Activated naive CD4-positive, alpha-beta T cell treated with anti-CD3 and anti-CD28 coated beads for 36 hours (primary cell): ENCODE measurements at regions of chr11 and their contacts with region 1.

Region 1: DNA sequence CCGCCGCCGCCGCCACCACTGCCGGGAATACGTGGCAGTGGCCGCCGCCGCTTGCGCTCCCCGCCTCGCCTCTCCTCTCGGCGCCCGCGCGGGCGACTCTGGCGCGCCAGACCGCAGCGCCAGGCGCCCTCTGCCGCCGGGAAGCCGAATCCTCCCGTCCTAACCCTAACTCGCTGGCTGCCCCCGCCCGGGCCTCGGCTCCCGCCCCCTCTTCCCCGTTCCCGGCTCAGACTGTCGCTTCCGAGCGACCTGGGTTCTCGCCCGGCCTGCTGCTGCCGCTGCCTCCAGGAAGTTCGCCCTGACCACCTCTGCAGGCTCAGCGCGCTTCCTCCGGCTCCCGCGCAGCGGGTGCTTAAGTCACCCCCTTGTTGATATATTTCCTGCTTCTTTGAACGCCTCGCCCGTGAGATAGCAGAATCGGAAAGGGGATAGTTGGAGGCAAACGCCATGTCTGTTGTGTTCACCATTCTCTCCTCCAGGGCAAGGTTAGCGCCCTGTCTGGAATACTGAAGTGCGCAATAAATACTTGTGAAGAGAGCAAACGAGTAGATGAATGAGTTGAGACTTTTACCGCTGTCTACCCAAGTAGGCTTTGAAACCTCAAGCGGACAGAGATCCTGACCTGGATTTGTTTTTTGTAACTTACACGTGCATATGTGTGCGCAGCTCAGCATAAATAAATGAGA is at the start of gene SMCO4:
- DNase-seq: peak; percentile 84
- H3K4me3 Mint-ChIP-seq: peak within 1 kb of the TSS; percentile 87
- H3K27ac Mint-ChIP-seq: peak within 1 kb of the TSS; percentile 82
- H3K4me1 Mint-ChIP-seq: peaks cover 20% of the 10 kb centered on the region
- H3K27me3 Mint-ChIP-seq: no peaks in the 10 kb centered on the region
- total RNA-seq, gene SMCO4: 23.7 to 26.8 TPM

Region 2: GRCh38 chr11:93197380-93198214 is 345.8 kb before region 1 on chr11 and contains the start of gene SLC36A4:
- CTCF ChIA-PET with region 1: no interaction called
- intact Hi-C with region 1: loop called (anchors 2 kb)
- DNase-seq: peak; percentile 92
- H3K4me3 Mint-ChIP-seq: peak within 1 kb of the TSS; percentile 80
- H3K27ac Mint-ChIP-seq: peak within 1 kb of the TSS; percentile 94
- H3K4me1 Mint-ChIP-seq: peaks cover 14% of the 10 kb centered on the region
- H3K27me3 Mint-ChIP-seq: no peaks in the 10 kb centered on the region
- total RNA-seq, gene SLC36A4: 13.2 to 13.9 TPM

Region 3: GRCh38 chr11:93652161-93652597 is 108.7 kb after region 1 on chr11:
- CTCF ChIA-PET with region 1: interaction called, 5 read pairs
- intact Hi-C with region 1: loop called (anchors 1 kb)
- DNase-seq: peak; percentile 17
- H3K4me3 Mint-ChIP-seq: no peak overlapping the region
- H3K27ac Mint-ChIP-seq: no peak overlapping the region
- H3K4me1 Mint-ChIP-seq: peaks cover 3% of the 10 kb centered on the region
- H3K27me3 Mint-ChIP-seq: no peaks in the 10 kb centered on the region

Region 4: GRCh38 chr11:93784152-93784934 is 240.9 kb after region 1 on chr11 and contains the start of gene MED17:
- CTCF ChIA-PET with region 1: no interaction called
- intact Hi-C with region 1: loop called (anchors 1 kb)
- DNase-seq: peak; percentile 94
- H3K4me3 Mint-ChIP-seq: peak within 1 kb of the TSS; percentile 99
- H3K27ac Mint-ChIP-seq: peak within 1 kb of the TSS; percentile 98
- H3K4me1 Mint-ChIP-seq: peaks cover 43% of the 10 kb centered on the region
- H3K27me3 Mint-ChIP-seq: no peaks in the 10 kb centered on the region
- total RNA-seq, gene MED17: 19.4 to 22.6 TPM

Region 5: GRCh38 chr11:94326947-94327346 is 783.5 kb after region 1 on chr11:
- CTCF ChIA-PET with region 1: no interaction called
- intact Hi-C with region 1: no loop called
- DNase-seq: no peak
- H3K4me3 Mint-ChIP-seq: no peak overlapping the region
- H3K27ac Mint-ChIP-seq: no peak overlapping the region
- H3K4me1 Mint-ChIP-seq: no peaks in the 10 kb centered on the region
- H3K27me3 Mint-ChIP-seq: peaks cover 4% of the 10 kb centered on the region